Right ventricle myocardium inferior (tissue), 1 donor: ENCODE measurements at regions of chr18 and their contacts with region 1.

Region 1: DNA sequence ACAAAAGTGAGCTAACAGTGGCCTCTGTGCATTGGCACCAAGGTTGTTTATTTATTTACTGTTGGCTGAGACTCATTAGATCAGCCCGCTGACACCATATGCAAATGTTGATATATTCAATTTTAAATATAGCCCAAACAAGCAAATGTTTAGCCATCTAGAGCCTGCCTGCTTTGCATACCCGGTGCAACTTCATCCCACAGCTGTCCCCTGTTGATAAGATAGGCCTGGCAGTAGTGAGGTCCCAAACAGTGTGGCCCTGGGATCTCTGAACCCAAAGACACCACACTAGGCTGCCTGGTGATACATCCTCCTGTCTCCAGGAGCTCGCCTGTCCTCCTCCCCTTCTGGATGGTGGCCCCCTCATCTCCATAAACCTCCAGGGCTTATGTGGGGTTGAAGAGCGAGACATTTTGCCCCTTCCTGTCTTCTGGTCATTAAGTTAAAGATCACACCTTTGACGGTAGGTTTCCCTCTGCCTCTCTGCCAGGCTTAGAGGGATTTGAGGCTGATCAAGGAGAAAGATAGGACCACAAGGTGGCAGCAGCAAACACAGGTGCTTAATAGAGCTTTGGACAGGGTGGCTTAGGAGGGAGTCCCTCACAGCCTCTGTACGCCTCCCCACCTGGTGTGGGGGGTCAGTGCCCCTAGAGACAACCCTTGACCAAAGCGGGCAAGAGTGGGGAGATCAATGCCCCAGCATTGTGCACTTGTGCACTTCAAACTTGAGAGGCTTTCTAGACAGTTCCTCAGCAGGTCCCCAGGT is 23.7 kb upstream of the MYO5B start:
- DNase-seq: no peak
- ATAC-seq: no peak

Region 2: DNA sequence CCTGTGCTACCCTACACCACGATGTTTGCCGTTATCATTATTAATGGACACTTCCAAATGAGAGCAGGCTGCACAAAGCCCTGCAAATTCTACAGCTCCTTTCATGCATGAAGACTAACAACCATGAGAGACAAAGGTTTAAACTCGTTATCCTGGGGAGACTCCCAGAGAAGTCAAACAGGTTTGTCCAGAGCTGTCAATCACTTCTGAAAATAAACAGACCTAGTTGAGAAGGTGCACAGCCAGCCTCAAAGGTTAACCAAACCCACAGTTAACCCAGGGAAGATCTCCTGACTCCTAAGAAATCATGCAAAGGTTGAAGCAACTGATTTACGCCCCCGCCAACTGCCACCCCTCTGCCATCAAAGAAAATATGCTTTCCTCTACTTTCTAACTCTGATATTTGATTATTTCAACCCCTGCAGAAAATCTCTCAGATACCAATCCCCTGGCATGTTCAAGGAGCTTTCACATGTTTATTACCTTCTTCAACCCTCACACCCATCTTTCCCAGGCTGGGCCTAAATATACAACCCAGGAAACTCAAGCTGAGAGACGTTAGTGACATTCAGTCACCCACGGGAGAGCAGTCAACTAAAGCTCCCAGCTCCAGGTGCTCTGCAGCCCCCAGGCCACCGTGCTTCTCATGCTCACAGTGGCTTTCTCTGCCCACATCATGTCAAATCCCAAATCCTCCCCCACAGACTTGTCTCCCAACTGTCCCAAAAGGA is 59.5 kb before region 1 on chr18:
- intact Hi-C with region 1: no loop called
- DNase-seq: no peak
- ATAC-seq: no peak

Region 3: GRCh38 chr18:50356036-50356945 is 137.7 kb after region 1 on chr18:
- intact Hi-C with region 1: loop called (anchors 5 kb)
- DNase-seq: no peak
- ATAC-seq: peak; percentile 10